Naive thymus-derived CD4-positive, alpha-beta T cell (primary cell): ENCODE measurements at regions of chr14 and their contacts with region 1.

Region 1: DNA sequence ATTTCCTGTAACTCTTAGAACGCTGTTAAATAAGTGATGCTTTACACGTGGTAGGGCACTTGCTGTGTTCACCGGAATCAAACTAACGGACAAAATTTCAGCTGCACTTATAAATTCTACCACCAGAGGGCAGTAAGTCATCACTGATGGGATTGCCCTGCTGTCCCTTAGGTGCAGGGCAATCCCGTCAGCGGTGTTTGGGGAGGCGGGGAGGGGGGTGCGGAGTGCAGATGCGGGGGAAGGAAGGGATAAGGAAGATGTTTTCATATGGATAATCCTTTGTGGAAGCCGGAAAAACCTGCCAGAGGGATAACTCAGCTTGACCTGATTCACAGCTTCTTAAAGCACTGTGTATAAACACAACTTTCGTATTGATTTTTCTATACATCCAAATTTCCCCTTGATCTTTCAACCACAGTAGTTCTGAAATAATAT is 21.7 kb upstream of the SLC10A1 start:
- DNase-seq: peak; percentile 16 to 76 (median 53)
- ATAC-seq: peak; percentile 84
- H3K4me3 ChIP-seq: no peak overlapping the region
- H3K4me3 Mint-ChIP-seq: no peak overlapping the region
- H3K27ac ChIP-seq: no peak overlapping the region
- H3K27ac Mint-ChIP-seq: no peak overlapping the region
- H3K4me1 ChIP-seq: no peaks in the 10 kb centered on the region
- H3K4me1 Mint-ChIP-seq: peaks cover 0 to 4% (median 3%) of the 10 kb centered on the region in 7 donors
- H3K27me3 ChIP-seq: no peaks in the 10 kb centered on the region
- H3K27me3 Mint-ChIP-seq: peaks cover 0 to 8% (median 4%) of the 10 kb centered on the region in 5 donors

Region 2: GRCh38 chr14:69600304-69600891 is 218.4 kb before region 1 on chr14:
- CTCF ChIA-PET with region 1: no interaction called
- POLR2A ChIA-PET with region 1: no interaction called
- intact Hi-C with region 1: loop called in 1 of 2 experiments (anchors 5 kb)
- DNase-seq: no peak
- ATAC-seq: no peak
- H3K4me3 ChIP-seq: no peak overlapping the region
- H3K4me3 Mint-ChIP-seq: no peak overlapping the region
- H3K27ac ChIP-seq: no peak overlapping the region
- H3K27ac Mint-ChIP-seq: no peak overlapping the region
- H3K4me1 ChIP-seq: no peaks in the 10 kb centered on the region
- H3K4me1 Mint-ChIP-seq: peaks cover 0 to 11% (median 4%) of the 10 kb centered on the region in 7 donors
- H3K27me3 ChIP-seq: no peaks in the 10 kb centered on the region
- H3K27me3 Mint-ChIP-seq: peaks cover 0 to 5% (median 0%) of the 10 kb centered on the region in 5 donors

Region 3: DNA sequence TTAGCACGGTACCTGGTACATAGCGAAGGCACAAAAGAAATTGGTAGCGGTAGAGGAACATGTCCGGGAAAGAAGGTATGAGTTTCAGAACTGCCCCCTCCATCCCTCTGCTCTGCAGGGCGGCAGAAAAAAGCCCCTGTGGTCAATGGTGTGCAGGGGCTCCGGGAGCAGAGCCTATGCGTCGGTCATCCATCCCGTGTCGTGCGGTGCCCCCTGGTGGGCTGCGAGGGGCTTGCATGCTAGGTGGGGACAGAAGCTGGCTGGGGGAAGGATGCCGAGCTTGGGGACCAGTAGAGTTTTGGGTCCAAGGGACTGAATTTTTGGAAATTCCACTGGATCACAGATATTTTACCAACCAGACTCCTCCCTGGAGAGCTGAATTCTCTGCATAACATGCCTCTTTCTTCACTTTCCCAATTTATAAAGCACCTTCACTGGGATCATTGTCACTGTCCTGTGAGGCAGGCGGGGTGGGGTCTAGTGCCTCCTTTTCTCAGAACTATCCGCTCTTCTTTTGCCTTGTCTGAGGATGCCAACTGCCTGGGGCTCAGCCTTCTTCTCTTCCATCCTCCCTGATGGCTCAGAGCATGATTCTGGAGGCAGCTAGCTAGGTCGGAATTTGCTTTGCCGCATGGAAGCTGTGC is 209.1 kb after region 1 on chr14:
- CTCF ChIA-PET with region 1: interaction called, 4 read pairs
- POLR2A ChIA-PET with region 1: no interaction called
- intact Hi-C with region 1: loop called in 1 of 2 experiments (anchors 1 kb)
- DNase-seq: peak in 8 of 9 donors; percentile 18 to 74 (median 38)
- ATAC-seq: peak; percentile 61
- H3K4me3 ChIP-seq: no peak overlapping the region
- H3K4me3 Mint-ChIP-seq: no peak overlapping the region
- H3K27ac ChIP-seq: no peak overlapping the region
- H3K27ac Mint-ChIP-seq: no peak overlapping the region
- H3K4me1 ChIP-seq: no peaks in the 10 kb centered on the region
- H3K4me1 Mint-ChIP-seq: peaks cover 0 to 4% (median 0%) of the 10 kb centered on the region in 7 donors
- H3K27me3 ChIP-seq: no peaks in the 10 kb centered on the region
- H3K27me3 Mint-ChIP-seq: peaks cover 3 to 7% (median 6%) of the 10 kb centered on the region in 5 donors

Region 4: DNA sequence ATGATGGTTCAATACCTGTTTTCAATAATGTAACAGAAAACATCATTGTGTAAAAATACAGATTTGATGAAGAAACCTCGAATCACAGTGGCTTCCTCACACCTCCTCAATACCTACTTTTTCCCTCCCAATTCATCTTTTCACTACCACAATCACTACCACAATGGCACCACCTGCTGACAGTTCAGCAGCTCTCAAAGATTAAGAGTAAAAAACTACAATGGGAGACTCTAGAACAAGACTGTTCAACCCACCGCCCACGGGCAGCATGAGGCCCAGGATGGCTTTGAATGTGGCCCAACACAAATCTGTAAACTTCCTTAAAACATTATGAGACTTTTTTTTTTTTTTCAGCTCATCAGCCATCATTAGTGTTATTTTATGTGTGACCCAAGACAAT is 766.4 kb after region 1 on chr14:
- CTCF ChIA-PET with region 1: no interaction called
- POLR2A ChIA-PET with region 1: no interaction called
- intact Hi-C with region 1: loop called (anchors 5 to 10 kb)
- DNase-seq: no peak
- ATAC-seq: no peak
- H3K4me3 ChIP-seq: no peak overlapping the region
- H3K4me3 Mint-ChIP-seq: no peak overlapping the region
- H3K27ac ChIP-seq: no peak overlapping the region
- H3K27ac Mint-ChIP-seq: peak overlapping the region in 2 of 9 donors; percentile 6 to 11
- H3K4me1 ChIP-seq: no peaks in the 10 kb centered on the region
- H3K4me1 Mint-ChIP-seq: peaks cover 0 to 10% (median 3%) of the 10 kb centered on the region in 7 donors
- H3K27me3 ChIP-seq: no peaks in the 10 kb centered on the region
- H3K27me3 Mint-ChIP-seq: no peaks in the 10 kb centered on the region

Region 5: GRCh38 chr14:70809543-70810244 is 990.9 kb after region 1 on chr14:
- CTCF ChIA-PET with region 1: no interaction called
- POLR2A ChIA-PET with region 1: no interaction called
- intact Hi-C with region 1: loop called in 1 of 2 experiments (anchors 2 kb)
- DNase-seq: peak; percentile 68 to 87 (median 78)
- ATAC-seq: peak; percentile 90
- H3K4me3 ChIP-seq: peak overlapping the region; percentile 73
- H3K4me3 Mint-ChIP-seq: peak overlapping the region in 1 of 10 donors; percentile 87
- H3K27ac ChIP-seq: peak overlapping the region; percentile 65
- H3K27ac Mint-ChIP-seq: peak overlapping the region in 6 of 9 donors; percentile 79 to 92 (median 88)
- H3K4me1 ChIP-seq: peaks cover 3 to 10% of the 10 kb centered on the region in 2 donors
- H3K4me1 Mint-ChIP-seq: peaks cover 9 to 17% (median 13%) of the 10 kb centered on the region in 7 donors
- H3K27me3 ChIP-seq: no peaks in the 10 kb centered on the region
- H3K27me3 Mint-ChIP-seq: peaks cover 0 to 9% (median 4%) of the 10 kb centered on the region in 5 donors